ENCODE measurements at regions of chr12 and their contacts with region 1.

Region 1: GRCh38 chr12:113098446-113098896 is 37.1 kb downstream of the RASAL1 start:
- DNase-seq: peak; percentile 97
- H3K4me3 Mint-ChIP-seq: peak overlapping the region; percentile 19
- H3K27ac Mint-ChIP-seq: peak overlapping the region; percentile 91
- H3K4me1 Mint-ChIP-seq: peaks cover 15% of the 10 kb centered on the region
- H3K27me3 Mint-ChIP-seq: no peaks in the 10 kb centered on the region
- CTCF ChIP-seq: peak; percentile 95

Region 2: DNA sequence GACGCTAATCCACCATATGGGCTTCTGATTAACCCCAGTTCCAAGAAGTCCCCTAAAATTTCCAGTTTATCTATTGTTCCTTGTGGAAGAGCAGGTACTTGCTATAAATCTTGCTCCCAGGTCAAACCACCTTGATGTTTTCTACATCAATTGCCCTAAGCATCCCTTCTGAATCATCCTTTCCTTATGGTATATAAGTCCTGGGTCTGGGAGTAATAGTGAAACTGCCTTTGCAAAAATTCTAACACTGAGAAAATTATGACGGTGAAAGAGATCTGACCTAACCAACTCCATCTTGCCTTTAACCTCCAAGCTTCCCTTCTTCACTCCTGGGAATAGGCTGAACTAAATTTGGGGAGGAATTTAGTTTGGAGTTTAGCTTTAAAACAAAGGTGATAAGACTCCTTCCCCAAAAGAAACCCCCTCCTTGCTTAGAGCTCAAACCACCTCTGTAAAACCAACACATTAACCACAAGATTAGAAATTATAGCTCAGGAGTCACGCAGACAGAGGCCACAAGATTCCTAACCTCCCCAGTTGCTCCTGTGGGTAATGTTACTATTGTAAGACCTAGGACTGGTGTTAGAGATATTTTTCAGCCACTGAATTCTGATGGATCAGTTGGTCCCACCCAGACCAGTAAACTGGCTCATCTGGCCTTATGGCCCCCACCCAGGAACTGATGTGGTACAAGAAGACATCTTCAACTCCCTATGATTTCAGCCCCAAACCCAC is 75.7 kb before region 1 on chr12:
- CTCF ChIA-PET with region 1: no interaction called
- intact Hi-C with region 1: no loop called
- DNase-seq: no peak
- H3K4me3 Mint-ChIP-seq: no peak overlapping the region
- H3K27ac Mint-ChIP-seq: no peak overlapping the region
- H3K4me1 Mint-ChIP-seq: no peaks in the 10 kb centered on the region
- H3K27me3 Mint-ChIP-seq: peaks cover 79% of the 10 kb centered on the region
- CTCF ChIP-seq: no peak

Region 3: GRCh38 chr12:113048716-113049127 is 49.7 kb before region 1 on chr12:
- CTCF ChIA-PET with region 1: no interaction called
- intact Hi-C with region 1: loop called (anchors 1 kb)
- DNase-seq: peak; percentile 80
- H3K4me3 Mint-ChIP-seq: no peak overlapping the region
- H3K27ac Mint-ChIP-seq: no peak overlapping the region
- H3K4me1 Mint-ChIP-seq: no peaks in the 10 kb centered on the region
- H3K27me3 Mint-ChIP-seq: peaks cover 83% of the 10 kb centered on the region
- CTCF ChIP-seq: peak; percentile 59

Region 4: DNA sequence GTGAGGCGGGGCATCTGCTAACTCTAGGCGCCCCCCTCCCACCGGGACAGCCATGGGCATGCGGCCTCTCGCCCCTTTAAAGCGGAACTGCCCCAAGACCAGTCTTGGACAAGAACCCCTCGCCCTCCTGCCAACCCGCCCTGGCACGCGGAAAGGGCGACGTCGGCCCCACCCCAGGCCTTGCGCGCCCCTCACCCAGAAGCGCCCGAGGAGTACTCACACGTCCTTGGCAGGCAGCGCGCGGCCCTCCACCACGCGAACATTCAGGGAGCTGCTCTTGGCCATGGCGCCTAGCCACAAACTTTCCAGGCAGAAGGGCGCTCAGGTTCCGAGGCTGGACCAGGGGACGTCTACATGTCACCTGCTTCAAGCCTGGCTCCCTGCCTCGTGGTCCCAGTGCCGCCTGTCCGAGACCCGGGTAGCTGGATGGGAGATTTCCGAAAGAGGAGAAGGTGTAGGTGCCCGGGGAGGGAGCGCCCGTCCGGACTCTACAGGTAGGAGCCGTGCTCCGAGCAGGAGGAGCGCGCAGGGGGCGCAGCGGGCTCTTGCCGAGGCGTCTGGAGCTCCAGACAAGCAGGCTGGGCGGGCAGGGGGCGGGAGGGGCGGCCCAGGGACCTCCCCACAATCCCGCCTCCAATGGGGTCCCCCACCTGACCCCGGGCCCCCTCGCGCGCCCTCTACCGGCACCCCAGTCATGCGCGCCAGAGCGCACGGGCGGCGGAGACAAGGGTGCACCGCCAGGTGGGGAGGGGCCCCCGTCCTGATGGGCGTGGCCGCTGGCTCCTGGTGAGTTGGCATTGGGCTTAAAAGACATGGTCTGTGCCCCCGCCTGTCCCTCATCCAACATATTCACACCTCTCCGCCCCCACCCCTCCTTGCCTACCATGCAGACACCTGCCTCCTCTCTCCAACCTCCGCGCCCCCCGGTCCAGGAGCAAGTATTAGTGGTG is 37.0 kb after region 1 on chr12 and contains the start of gene RASAL1:
- CTCF ChIA-PET with region 1: no interaction called
- intact Hi-C with region 1: loop called (anchors 2 kb)
- DNase-seq: peak; percentile 100
- H3K4me3 Mint-ChIP-seq: peak within 1 kb of the TSS; percentile 97
- H3K27ac Mint-ChIP-seq: peak within 1 kb of the TSS; percentile 96
- H3K4me1 Mint-ChIP-seq: peaks cover 52% of the 10 kb centered on the region
- H3K27me3 Mint-ChIP-seq: no peaks in the 10 kb centered on the region
- CTCF ChIP-seq: peak; percentile 97
- total RNA-seq, gene RASAL1: 59.7 and 85.9 TPM in 2 replicates

Measured in Calu3 (cell line).